Naive thymus-derived CD4-positive, alpha-beta T cell (primary cell): ENCODE measurements at regions of chr7 and their contacts with region 1.

Region 1: DNA sequence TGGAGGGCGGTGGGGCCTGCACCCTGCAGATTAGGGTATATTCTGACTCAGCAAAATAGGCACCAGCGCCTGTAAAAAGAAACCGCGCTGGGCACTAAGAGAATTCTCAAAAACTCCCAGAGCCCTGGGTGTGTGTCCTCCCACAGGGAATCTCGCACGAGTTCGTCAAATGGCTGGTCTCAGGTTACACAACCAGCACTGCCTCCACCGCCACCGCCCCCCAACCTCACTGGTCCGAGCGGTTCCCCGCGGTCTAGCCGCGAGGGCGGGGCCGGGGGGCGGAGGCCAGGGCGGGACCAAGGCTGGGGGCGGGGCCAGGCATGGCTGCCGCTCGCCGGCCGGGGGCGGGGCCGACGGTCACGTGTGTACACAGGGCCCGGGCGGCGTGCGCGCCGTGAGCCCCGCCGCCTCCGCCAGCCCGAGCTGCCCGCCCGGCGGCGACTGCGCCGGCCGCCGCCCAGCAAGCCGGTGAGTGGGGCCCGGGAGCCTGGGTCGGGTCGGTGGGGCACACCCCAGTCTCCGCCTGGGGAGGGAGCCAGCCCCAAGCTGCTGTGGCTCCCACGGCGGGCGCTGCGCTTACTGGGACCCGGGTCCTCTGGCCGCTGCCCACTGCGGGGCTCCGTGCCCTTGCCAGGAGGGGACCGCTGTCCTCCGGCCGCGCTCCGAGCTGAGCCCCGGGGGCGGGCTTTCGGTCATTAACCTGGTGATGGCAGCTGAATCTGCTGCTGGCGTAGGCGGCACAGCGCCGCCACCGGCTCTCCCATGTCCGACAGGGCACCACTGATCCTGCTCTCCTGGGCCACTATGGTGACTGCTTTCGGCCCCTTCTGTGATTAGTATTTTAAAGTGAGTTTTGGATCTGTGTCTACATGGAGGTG is at the start of gene GPR146:
- DNase-seq: peak; percentile 73 to 97 (median 86)
- ATAC-seq: peak; percentile 96
- H3K4me3 ChIP-seq: peak within 1 kb of the TSS; percentile 79
- H3K4me3 Mint-ChIP-seq: peak within 1 kb of the TSS; percentile 88 to 94 (median 91)
- H3K27ac ChIP-seq: peak within 1 kb of the TSS; percentile 83
- H3K27ac Mint-ChIP-seq: peak within 1 kb of the TSS; percentile 62 to 93 (median 85)
- H3K4me1 ChIP-seq: peaks cover 49 to 54% of the 10 kb centered on the region in 2 donors
- H3K4me1 Mint-ChIP-seq: peaks cover 42 to 75% (median 56%) of the 10 kb centered on the region in 7 donors
- H3K27me3 ChIP-seq: no peaks in the 10 kb centered on the region
- H3K27me3 Mint-ChIP-seq: peaks cover 0 to 13% (median 0%) of the 10 kb centered on the region in 5 donors
- total RNA-seq, gene GPR146: 10.1 to 26.5 (median 15.9) TPM

Region 2: DNA sequence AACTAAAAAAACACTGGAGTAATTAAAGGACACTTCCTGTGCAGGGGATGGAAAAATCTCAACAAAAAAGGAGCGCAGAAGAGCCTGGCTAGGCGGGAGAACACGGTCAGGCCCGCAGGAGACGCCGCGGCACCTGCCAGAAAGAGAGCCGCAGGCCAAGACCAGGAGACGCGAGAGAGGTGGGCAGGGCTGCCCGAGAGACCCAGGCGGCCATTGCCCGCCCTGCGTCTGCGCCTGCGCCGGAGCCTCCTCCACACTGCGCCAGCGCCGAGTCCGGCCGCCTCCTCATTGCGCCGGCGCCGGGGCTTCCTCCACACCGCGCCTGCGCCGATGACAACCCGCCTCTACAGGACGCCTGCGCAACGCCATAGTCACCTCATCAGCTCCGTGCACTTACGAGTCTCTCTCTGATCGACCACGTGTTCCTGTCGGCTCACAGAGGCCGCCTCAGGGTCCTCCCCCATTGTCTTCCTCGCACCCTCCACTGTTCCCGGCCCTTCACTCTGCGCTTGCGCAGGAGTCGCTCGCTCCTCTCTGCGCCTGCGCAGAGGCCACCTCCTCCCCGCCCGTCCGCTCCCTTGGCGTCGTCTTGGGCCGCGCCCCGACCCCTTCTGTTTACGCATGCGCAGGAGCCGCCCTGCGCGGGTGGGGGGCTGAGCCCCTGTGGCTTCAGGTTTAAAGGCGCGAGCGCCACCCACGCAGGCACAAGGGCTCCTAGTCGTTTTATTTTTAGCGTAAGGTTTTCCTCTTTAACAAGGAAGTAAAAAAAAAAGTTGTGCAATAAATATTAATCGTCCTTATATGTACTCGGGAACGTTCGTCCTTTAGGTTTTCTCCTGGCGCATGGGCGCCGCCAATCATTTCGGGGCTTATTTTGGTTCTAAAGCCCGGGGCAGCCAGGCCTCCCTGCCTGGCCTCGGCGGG is 895.2 kb before region 1 on chr7:
- CTCF ChIA-PET with region 1: no interaction called
- POLR2A ChIA-PET with region 1: no interaction called
- intact Hi-C with region 1: loop called in 1 of 2 experiments (anchors 5 kb)
- DNase-seq: peak; percentile 97 to 99 (median 99)
- ATAC-seq: peak; percentile 97
- H3K4me3 ChIP-seq: peak overlapping the region; percentile 52
- H3K4me3 Mint-ChIP-seq: peak overlapping the region; percentile 80 to 97 (median 91)
- H3K27ac ChIP-seq: peak overlapping the region; percentile 82
- H3K27ac Mint-ChIP-seq: peak overlapping the region; percentile 94 to 100 (median 99)
- H3K4me1 ChIP-seq: peaks cover 18 to 19% of the 10 kb centered on the region in 2 donors
- H3K4me1 Mint-ChIP-seq: peaks cover 9 to 25% (median 20%) of the 10 kb centered on the region in 7 donors
- H3K27me3 ChIP-seq: no peaks in the 10 kb centered on the region
- H3K27me3 Mint-ChIP-seq: peaks cover 0 to 4% (median 0%) of the 10 kb centered on the region in 5 donors

Region 3: DNA sequence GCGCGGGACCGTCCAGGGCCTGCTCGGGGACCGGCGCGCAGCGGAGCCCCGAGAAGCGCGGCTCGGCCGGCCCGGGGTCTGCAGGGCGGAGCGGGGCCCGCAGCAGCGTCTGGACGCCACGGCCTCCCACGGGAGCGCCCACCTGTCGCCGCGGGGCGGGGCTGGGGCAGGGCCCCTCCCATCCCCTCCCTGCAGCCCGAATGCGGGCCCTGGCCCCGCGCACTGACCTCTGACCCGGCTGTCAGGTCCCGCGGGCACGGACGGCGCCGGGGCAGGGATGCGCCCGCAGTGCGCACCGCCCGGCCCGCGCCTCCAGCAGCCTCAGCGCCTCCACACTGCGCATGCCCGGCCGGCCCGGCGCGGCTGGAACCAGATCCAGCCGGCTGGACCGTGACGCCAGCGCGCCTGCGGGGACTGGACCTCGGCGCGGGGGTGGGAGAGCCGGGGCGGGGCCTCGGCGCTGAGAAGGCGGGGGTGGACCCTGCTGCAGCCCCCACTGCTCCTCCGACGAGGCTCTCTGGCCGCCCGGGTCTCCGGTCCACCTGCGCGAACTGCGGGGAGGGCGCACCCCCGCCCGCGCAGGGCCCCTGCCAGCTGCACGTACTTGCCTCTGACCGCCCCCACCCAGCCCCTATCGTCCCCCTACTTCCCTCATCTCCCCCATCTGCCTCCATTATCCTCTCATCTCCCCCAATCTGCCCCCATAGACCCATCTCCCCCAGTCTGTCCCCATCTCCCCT is 16.2 kb before region 1 on chr7:
- CTCF ChIA-PET with region 1: interaction called, 3 read pairs
- POLR2A ChIA-PET with region 1: interaction called, 32 read pairs
- intact Hi-C with region 1: loop called in 1 of 2 experiments (anchors 1 kb)
- DNase-seq: peak; percentile 50 to 94 (median 81)
- ATAC-seq: peak; percentile 83
- H3K4me3 ChIP-seq: peak overlapping the region; percentile 64
- H3K4me3 Mint-ChIP-seq: peak overlapping the region; percentile 72 to 90 (median 80)
- H3K27ac ChIP-seq: peak overlapping the region; percentile 80
- H3K27ac Mint-ChIP-seq: peak overlapping the region in 7 of 9 donors; percentile 56 to 92 (median 86)
- H3K4me1 ChIP-seq: peaks cover 20% of the 10 kb centered on the region in 2 donors
- H3K4me1 Mint-ChIP-seq: peaks cover 25 to 59% (median 44%) of the 10 kb centered on the region in 7 donors
- H3K27me3 ChIP-seq: no peaks in the 10 kb centered on the region
- H3K27me3 Mint-ChIP-seq: no peaks in the 10 kb centered on the region

Region 4: GRCh38 chr7:1033546-1034145 is 10.8 kb before region 1 on chr7:
- CTCF ChIA-PET with region 1: interaction called, 3 read pairs
- POLR2A ChIA-PET with region 1: interaction called, 32 read pairs
- intact Hi-C with region 1: loop called in 1 of 2 experiments (anchors 1 kb)
- DNase-seq: peak in 7 of 9 donors; percentile 45 to 69 (median 58)
- ATAC-seq: peak; percentile 58
- H3K4me3 ChIP-seq: peak overlapping the region; percentile 8
- H3K4me3 Mint-ChIP-seq: peak overlapping the region; percentile 50 to 86 (median 74)
- H3K27ac ChIP-seq: peak overlapping the region; percentile 39
- H3K27ac Mint-ChIP-seq: peak overlapping the region; percentile 60 to 89 (median 76)
- H3K4me1 ChIP-seq: peaks cover 26 to 32% of the 10 kb centered on the region in 2 donors
- H3K4me1 Mint-ChIP-seq: peaks cover 28 to 57% (median 49%) of the 10 kb centered on the region in 7 donors
- H3K27me3 ChIP-seq: no peaks in the 10 kb centered on the region
- H3K27me3 Mint-ChIP-seq: no peaks in the 10 kb centered on the region

Region 5: GRCh38 chr7:1059200-1060091 is 15.0 kb after region 1 on chr7:
- CTCF ChIA-PET with region 1: interaction called, 16 read pairs
- POLR2A ChIA-PET with region 1: interaction called, 52 read pairs
- intact Hi-C with region 1: loop called in 1 of 2 experiments (anchors 1 kb)
- DNase-seq: peak in 1 of 9 donors; percentile 44
- ATAC-seq: peak; percentile 41
- H3K4me3 ChIP-seq: no peak overlapping the region
- H3K4me3 Mint-ChIP-seq: peak overlapping the region in 3 of 10 donors; percentile 14 to 73 (median 17)
- H3K27ac ChIP-seq: no peak overlapping the region
- H3K27ac Mint-ChIP-seq: peak overlapping the region in 3 of 9 donors; percentile 12 to 63 (median 39)
- H3K4me1 ChIP-seq: peaks cover 0 to 17% of the 10 kb centered on the region in 2 donors
- H3K4me1 Mint-ChIP-seq: peaks cover 16 to 52% (median 25%) of the 10 kb centered on the region in 7 donors
- H3K27me3 ChIP-seq: no peaks in the 10 kb centered on the region
- H3K27me3 Mint-ChIP-seq: peaks cover 0 to 3% (median 0%) of the 10 kb centered on the region in 5 donors

Region 6: DNA sequence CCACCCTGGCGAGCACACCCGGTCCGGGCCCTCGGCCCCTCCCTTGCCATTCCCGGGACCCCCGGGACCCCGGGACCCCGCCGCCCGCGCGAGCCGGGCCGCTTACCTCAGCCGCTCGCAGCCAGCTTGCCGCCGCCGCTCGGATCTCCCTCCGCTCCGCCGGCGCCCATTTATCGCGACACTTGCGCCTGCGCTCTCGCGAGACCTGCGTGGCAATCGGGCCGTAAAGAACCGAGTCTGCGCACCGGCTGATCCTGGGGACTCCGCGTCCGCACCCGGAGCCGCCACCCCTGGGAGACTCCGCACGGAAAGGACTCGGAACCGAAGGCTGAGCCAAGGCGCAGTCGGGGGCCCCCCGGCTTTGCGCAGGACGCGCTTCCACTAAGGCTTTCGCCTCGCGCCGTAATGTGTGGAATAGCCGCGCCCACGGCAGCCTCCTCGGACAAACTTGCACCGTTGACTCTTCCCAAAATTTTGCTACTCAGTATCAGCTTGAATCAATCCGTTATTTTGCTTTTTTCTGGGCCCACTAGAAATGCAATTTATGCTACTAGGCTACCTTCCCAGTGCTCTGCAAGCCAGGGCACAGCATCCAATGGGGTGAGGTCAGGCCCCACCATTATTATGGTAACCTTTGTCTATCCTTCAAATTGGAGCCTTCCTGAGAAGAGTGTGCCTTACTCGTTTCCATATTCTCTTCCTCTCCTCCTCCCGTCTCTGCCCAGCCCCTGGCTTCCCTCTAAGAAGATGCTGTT is 1188.5 kb after region 1 on chr7 and contains the start of gene MAD1L1:
- CTCF ChIA-PET with region 1: no interaction called
- POLR2A ChIA-PET with region 1: no interaction called
- intact Hi-C with region 1: loop called in 1 of 2 experiments (anchors 10 kb)
- DNase-seq: peak; percentile 75 to 90 (median 88)
- ATAC-seq: peak; percentile 90
- H3K4me3 ChIP-seq: peak within 1 kb of the TSS; percentile 99
- H3K4me3 Mint-ChIP-seq: peak within 1 kb of the TSS; percentile 88 to 98 (median 95)
- H3K27ac ChIP-seq: peak within 1 kb of the TSS; percentile 80
- H3K27ac Mint-ChIP-seq: peak within 1 kb of the TSS; percentile 66 to 91 (median 86)
- H3K4me1 ChIP-seq: peaks cover 13 to 27% of the 10 kb centered on the region in 2 donors
- H3K4me1 Mint-ChIP-seq: peaks cover 16 to 58% (median 31%) of the 10 kb centered on the region in 7 donors
- H3K27me3 ChIP-seq: no peaks in the 10 kb centered on the region
- H3K27me3 Mint-ChIP-seq: no peaks in the 10 kb centered on the region
- total RNA-seq, gene MAD1L1: 112 to 141 (median 125) TPM